ENCODE measurements at regions of chr6 and their contacts with region 1.

Region 1: GRCh38 chr6:111997078-111997852 is 56.6 kb upstream of the CCN6 start:
- DNase-seq: peak; percentile 76 to 79 (median 78)
- H3K4me3 ChIP-seq: peak overlapping the region in 1 of 2 donors; percentile 21
- H3K4me3 Mint-ChIP-seq: peak overlapping the region; percentile 64 to 85 (median 80)
- H3K27ac ChIP-seq: no peak overlapping the region
- H3K27ac Mint-ChIP-seq: peak overlapping the region; percentile 76 to 90 (median 85)
- H3K4me1 ChIP-seq: peaks cover 38% of the 10 kb centered on the region
- H3K4me1 Mint-ChIP-seq: peaks cover 39 to 47% (median 42%) of the 10 kb centered on the region in 4 donors
- H3K27me3 ChIP-seq: no peaks in the 10 kb centered on the region
- H3K27me3 Mint-ChIP-seq: no peaks in the 10 kb centered on the region

Region 2: DNA sequence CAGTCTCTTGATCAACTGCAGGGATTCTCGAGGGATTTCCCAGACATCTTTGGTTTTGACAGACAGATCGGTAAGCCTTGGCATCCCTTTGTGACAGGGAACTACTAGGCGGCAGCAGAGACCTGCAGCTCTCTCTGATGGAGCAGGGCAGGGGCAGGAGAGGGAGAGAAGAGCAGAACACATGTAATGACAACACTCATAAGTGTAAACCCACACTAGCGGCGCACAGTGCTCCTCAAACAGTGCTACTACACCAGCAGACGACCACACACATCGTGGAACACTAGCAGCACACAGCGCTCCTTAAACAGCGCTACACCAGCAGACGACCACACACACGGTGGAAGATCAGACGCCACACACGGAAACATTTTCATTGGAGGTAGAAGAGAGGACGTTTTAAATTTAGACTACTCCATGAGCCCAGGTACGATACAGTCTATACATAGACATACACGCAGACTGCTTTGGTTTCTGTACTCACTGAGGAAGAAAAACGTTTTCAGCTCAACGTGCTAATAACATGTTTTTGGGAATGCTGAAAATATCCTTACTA is 297.1 kb before region 1 on chr6:
- CTCF ChIA-PET with region 1: no interaction called
- POLR2A ChIA-PET with region 1: no interaction called
- intact Hi-C with region 1: no loop called
- DNase-seq: no peak
- H3K4me3 ChIP-seq: no peak overlapping the region
- H3K4me3 Mint-ChIP-seq: peak overlapping the region in 5 of 8 donors; percentile 7 to 66 (median 33)
- H3K27ac ChIP-seq: no peak overlapping the region
- H3K27ac Mint-ChIP-seq: peak overlapping the region in 6 of 7 donors; percentile 23 to 78 (median 58)
- H3K4me1 ChIP-seq: peaks cover 24% of the 10 kb centered on the region
- H3K4me1 Mint-ChIP-seq: peaks cover 28 to 55% (median 42%) of the 10 kb centered on the region in 4 donors
- H3K27me3 ChIP-seq: no peaks in the 10 kb centered on the region
- H3K27me3 Mint-ChIP-seq: no peaks in the 10 kb centered on the region

Region 3: GRCh38 chr6:111721753-111722154 is 275.5 kb before region 1 on chr6:
- CTCF ChIA-PET with region 1: interaction called, 19 read pairs
- POLR2A ChIA-PET with region 1: interaction called, 3 read pairs
- intact Hi-C with region 1: no loop called
- DNase-seq: peak; percentile 46 to 57 (median 50)
- H3K4me3 ChIP-seq: no peak overlapping the region
- H3K4me3 Mint-ChIP-seq: peak overlapping the region in 3 of 8 donors; percentile 17 to 81 (median 39)
- H3K27ac ChIP-seq: no peak overlapping the region
- H3K27ac Mint-ChIP-seq: peak overlapping the region; percentile 77 to 92 (median 88)
- H3K4me1 ChIP-seq: peaks cover 76% of the 10 kb centered on the region
- H3K4me1 Mint-ChIP-seq: peaks cover 61 to 84% (median 75%) of the 10 kb centered on the region in 4 donors
- H3K27me3 ChIP-seq: no peaks in the 10 kb centered on the region
- H3K27me3 Mint-ChIP-seq: no peaks in the 10 kb centered on the region

Region 4: DNA sequence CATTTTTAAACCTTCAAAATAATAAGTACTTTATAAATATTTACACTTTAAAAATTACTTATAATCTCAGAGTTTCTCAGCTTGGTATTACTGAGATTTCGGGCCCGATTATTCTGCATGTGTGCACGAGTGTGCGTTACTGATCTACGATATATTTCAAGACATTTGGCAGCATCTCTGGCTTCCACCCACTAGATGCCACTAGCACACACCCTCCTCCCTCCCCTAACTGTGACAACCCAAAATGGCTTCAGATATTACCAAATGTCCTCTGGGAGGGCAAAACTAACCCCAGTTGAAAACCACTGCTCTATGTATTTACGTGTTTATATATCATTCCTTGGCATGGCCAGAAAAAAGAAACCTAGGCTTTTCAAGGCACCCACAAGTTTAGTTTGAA is 219.9 kb before region 1 on chr6:
- CTCF ChIA-PET with region 1: interaction called, 11 read pairs
- POLR2A ChIA-PET with region 1: no interaction called
- intact Hi-C with region 1: loop called (anchors 1 kb)
- DNase-seq: peak in 3 of 5 donors; percentile 46 to 50 (median 48)
- H3K4me3 ChIP-seq: no peak overlapping the region
- H3K4me3 Mint-ChIP-seq: peak overlapping the region; percentile 31 to 72 (median 62)
- H3K27ac ChIP-seq: peak overlapping the region; percentile 34
- H3K27ac Mint-ChIP-seq: peak overlapping the region in 6 of 7 donors; percentile 76 to 94 (median 90)
- H3K4me1 ChIP-seq: peaks cover 90% of the 10 kb centered on the region
- H3K4me1 Mint-ChIP-seq: peaks cover 67 to 93% (median 79%) of the 10 kb centered on the region in 4 donors
- H3K27me3 ChIP-seq: no peaks in the 10 kb centered on the region
- H3K27me3 Mint-ChIP-seq: no peaks in the 10 kb centered on the region

Region 5: DNA sequence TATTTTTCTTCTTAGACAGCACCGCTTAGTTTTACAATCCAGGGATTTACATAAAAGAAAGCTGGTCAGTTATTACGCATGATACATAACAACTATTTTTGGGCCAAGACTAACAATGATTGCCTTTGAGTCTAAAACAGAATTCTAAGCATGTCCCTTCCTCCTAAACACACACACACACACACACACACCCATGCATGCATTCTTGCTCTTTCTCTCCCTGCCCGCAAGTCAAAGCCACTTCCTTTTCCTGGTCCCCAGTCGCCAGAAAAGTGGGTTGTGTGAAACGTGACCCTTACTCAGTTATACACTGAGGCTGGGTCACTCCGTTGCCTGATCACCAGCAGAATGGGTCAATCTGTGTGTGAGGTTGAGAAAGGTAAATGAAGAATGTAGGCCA is 155.4 kb before region 1 on chr6:
- CTCF ChIA-PET with region 1: interaction called, 6 read pairs
- POLR2A ChIA-PET with region 1: interaction called, 15 read pairs
- intact Hi-C with region 1: no loop called
- DNase-seq: peak; percentile 65 to 69 (median 66)
- H3K4me3 ChIP-seq: peak overlapping the region in 1 of 2 donors; percentile 29
- H3K4me3 Mint-ChIP-seq: no peak overlapping the region
- H3K27ac ChIP-seq: peak overlapping the region; percentile 54
- H3K27ac Mint-ChIP-seq: no peak overlapping the region
- H3K4me1 ChIP-seq: peaks cover 100% of the 10 kb centered on the region
- H3K4me1 Mint-ChIP-seq: peaks cover 0 to 60% (median 29%) of the 10 kb centered on the region in 4 donors
- H3K27me3 ChIP-seq: no peaks in the 10 kb centered on the region
- H3K27me3 Mint-ChIP-seq: no peaks in the 10 kb centered on the region

Region 6: DNA sequence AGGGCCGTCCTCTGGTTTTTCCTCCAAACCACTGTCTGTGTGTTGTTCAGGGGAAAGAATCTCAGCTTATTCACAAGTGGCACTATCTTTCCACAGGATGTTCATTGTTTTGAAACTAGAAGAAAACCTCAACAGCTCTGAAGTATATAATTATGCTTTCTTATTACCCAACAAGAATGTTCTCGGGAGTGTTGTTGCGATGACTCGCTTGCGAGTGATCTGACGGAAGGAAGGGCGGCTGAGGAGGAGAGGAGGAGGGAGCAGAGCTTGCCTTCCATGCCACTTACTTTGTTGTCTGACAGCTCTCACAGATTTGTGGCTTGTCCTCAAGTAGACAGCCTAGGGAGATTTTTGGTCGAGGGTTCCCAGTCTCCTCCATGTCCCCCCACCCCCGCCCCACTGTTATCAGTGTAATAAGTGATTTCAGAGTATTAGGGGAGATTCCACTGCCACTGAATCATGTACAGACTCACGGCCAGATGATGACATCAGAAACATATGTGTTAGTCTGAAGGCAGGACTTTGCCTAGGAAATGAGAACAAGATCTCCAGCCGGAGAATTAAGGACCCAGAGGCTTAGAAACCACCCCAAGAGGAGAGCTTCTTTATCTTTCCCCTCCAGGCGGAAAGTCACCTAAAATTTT is 24.0 kb before region 1 on chr6:
- CTCF ChIA-PET with region 1: interaction called, 9 read pairs
- POLR2A ChIA-PET with region 1: interaction called, 62 read pairs
- intact Hi-C with region 1: loop called (anchors 2 kb)
- DNase-seq: peak; percentile 63 to 91 (median 78)
- H3K4me3 ChIP-seq: peak overlapping the region in 1 of 2 donors; percentile 6
- H3K4me3 Mint-ChIP-seq: peak overlapping the region; percentile 61 to 79 (median 66)
- H3K27ac ChIP-seq: peak overlapping the region; percentile 75
- H3K27ac Mint-ChIP-seq: peak overlapping the region; percentile 89 to 99 (median 95)
- H3K4me1 ChIP-seq: peaks cover 29% of the 10 kb centered on the region
- H3K4me1 Mint-ChIP-seq: peaks cover 30 to 60% (median 48%) of the 10 kb centered on the region in 4 donors
- H3K27me3 ChIP-seq: no peaks in the 10 kb centered on the region
- H3K27me3 Mint-ChIP-seq: no peaks in the 10 kb centered on the region

Region 7: DNA sequence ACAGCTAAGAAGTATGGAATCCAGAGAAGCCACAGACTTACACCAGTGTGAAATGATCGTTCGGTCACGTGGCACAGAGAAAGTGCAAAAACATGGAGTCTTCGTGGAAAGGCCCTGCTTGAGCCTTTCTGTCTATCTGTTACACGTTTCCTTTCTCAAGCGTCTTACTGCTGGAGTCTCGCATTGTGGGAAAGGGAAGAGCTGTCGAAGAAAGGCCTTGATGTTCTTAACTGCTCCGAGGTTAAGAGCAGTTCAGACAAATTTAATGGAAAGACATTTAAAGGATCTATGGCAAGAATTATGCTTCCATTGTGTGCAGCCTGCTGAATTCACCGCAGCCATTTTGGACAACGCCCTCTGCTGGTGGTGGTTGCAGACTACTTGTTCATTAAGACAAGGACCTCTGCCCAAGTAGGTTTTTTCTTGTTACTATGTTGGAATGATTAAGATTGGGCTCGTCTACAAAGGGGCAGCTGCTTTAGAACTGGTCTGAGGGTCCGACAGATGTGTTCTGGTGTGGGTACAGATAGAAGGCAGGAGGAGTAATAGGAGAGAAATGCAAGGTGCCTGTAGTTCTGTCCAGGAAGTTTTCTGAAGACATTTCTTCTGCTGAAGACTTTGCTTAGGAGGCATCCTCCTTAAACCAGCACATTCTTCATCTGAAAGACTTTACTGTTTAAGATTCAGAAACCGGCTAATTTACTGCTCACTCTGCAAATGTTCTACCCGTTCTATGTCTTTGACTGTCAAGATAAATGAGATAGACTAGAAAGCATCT is 32.0 kb after region 1 on chr6:
- CTCF ChIA-PET with region 1: interaction called, 10 read pairs
- POLR2A ChIA-PET with region 1: interaction called, 9 read pairs
- intact Hi-C with region 1: no loop called
- DNase-seq: peak; percentile 36 to 62 (median 43)
- H3K4me3 ChIP-seq: no peak overlapping the region
- H3K4me3 Mint-ChIP-seq: peak overlapping the region in 7 of 8 donors; percentile 35 to 91 (median 74)
- H3K27ac ChIP-seq: peak overlapping the region; percentile 61
- H3K27ac Mint-ChIP-seq: peak overlapping the region; percentile 84 to 98 (median 94)
- H3K4me1 ChIP-seq: peaks cover 76% of the 10 kb centered on the region
- H3K4me1 Mint-ChIP-seq: peaks cover 55 to 79% (median 68%) of the 10 kb centered on the region in 4 donors
- H3K27me3 ChIP-seq: no peaks in the 10 kb centered on the region
- H3K27me3 Mint-ChIP-seq: no peaks in the 10 kb centered on the region

Region 8: GRCh38 chr6:112049996-112050395 is 52.7 kb after region 1 on chr6:
- CTCF ChIA-PET with region 1: no interaction called
- POLR2A ChIA-PET with region 1: no interaction called
- intact Hi-C with region 1: no loop called
- DNase-seq: no peak
- H3K4me3 ChIP-seq: no peak overlapping the region
- H3K4me3 Mint-ChIP-seq: no peak overlapping the region
- H3K27ac ChIP-seq: no peak overlapping the region
- H3K27ac Mint-ChIP-seq: no peak overlapping the region
- H3K4me1 ChIP-seq: no peaks in the 10 kb centered on the region
- H3K4me1 Mint-ChIP-seq: no peaks in the 10 kb centered on the region
- H3K27me3 ChIP-seq: no peaks in the 10 kb centered on the region
- H3K27me3 Mint-ChIP-seq: peaks cover 1% of the 10 kb centered on the region in 2 donors

Measured in CD4-positive, alpha-beta memory T cell (primary cell).